Transverse colon (tissue), 4 donors: ENCODE measurements at regions of chr15 and their contacts with region 1.

Region 1: DNA sequence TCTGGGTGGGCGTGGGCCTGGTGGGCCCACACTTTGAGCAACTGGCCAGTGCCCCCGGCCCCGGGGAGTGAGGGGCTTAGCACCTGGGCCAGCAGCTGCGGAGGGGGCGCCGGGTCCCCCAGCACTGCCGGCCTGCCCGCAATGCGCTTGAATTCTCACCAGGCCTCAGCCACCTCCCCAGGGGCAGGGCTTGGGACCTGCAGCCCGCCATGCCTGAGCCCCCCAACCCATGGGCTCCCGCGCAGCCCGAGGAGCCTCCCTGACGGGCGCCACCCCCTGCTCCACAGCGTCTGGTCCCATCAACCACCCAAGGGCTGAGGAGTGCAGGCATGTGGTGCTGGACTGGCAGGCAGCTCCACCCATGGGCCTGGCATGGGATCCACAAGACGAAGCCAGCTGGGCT is 484.3 kb downstream of the UNC13C start:
- DNase-seq: no peak
- H3K4me3 ChIP-seq: no peak overlapping the region
- H3K27ac ChIP-seq: no peak overlapping the region
- H3K4me1 ChIP-seq: no peaks in the 10 kb centered on the region
- H3K27me3 ChIP-seq: no peaks in the 10 kb centered on the region
- CTCF ChIP-seq: no peak
- EP300 ChIP-seq: no peak
- POLR2A ChIP-seq: no peak

Region 2: GRCh38 chr15:53833134-53833624 is 629.3 kb before region 1 on chr15:
- in situ Hi-C with region 1: no loop called
- intact Hi-C with region 1: no loop called
- DNase-seq: no peak
- H3K4me3 ChIP-seq: no peak overlapping the region
- H3K27ac ChIP-seq: peak overlapping the region in 2 of 4 donors; percentile 41 to 60
- H3K4me1 ChIP-seq: peaks cover 13 to 63% (median 29%) of the 10 kb centered on the region in 4 donors
- H3K27me3 ChIP-seq: no peaks in the 10 kb centered on the region
- CTCF ChIP-seq: no peak
- EP300 ChIP-seq: no peak
- POLR2A ChIP-seq: no peak

Region 3: GRCh38 chr15:54353726-54354125 is 108.8 kb before region 1 on chr15:
- in situ Hi-C with region 1: no loop called
- intact Hi-C with region 1: no loop called
- DNase-seq: no peak
- H3K4me3 ChIP-seq: no peak overlapping the region
- H3K27ac ChIP-seq: no peak overlapping the region
- H3K4me1 ChIP-seq: no peaks in the 10 kb centered on the region
- H3K27me3 ChIP-seq: no peaks in the 10 kb centered on the region
- CTCF ChIP-seq: no peak
- EP300 ChIP-seq: no peak
- POLR2A ChIP-seq: no peak

Region 4: GRCh38 chr15:54681584-54681983 is 219.1 kb after region 1 on chr15:
- in situ Hi-C with region 1: no loop called
- intact Hi-C with region 1: loop called (anchors 10 kb)
- DNase-seq: no peak
- H3K4me3 ChIP-seq: no peak overlapping the region
- H3K27ac ChIP-seq: no peak overlapping the region
- H3K4me1 ChIP-seq: no peaks in the 10 kb centered on the region
- H3K27me3 ChIP-seq: no peaks in the 10 kb centered on the region
- CTCF ChIP-seq: no peak
- EP300 ChIP-seq: no peak
- POLR2A ChIP-seq: no peak